Right ventricle myocardium inferior (tissue), 1 donor: ENCODE measurements at regions of chr12 and their contacts with region 1.

Region 1: GRCh38 chr12:81627336-81628189 is 131.6 kb downstream of the PPFIA2 start:
- DNase-seq: no peak
- ATAC-seq: no peak

Region 2: DNA sequence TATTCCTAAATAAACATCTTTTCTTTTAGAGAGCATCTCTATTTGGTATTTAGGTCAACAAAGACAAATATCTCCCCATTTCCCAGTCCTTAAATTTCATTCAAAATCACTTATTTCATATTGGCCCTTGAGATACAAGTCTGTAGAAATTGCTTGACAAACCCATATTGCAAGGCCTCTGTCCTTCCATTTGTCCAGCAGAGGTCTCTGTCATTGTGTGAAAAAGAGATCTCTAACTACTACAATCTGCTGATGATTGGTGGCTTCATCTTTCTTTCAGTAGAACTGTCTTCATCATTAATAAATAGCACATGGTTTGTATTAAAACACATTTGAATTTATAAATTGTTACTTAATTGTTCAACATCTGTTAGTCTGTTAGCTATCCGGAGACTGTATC is 297.1 kb before region 1 on chr12:
- intact Hi-C with region 1: loop called (anchors 10 kb)
- DNase-seq: no peak
- ATAC-seq: no peak

Region 3: DNA sequence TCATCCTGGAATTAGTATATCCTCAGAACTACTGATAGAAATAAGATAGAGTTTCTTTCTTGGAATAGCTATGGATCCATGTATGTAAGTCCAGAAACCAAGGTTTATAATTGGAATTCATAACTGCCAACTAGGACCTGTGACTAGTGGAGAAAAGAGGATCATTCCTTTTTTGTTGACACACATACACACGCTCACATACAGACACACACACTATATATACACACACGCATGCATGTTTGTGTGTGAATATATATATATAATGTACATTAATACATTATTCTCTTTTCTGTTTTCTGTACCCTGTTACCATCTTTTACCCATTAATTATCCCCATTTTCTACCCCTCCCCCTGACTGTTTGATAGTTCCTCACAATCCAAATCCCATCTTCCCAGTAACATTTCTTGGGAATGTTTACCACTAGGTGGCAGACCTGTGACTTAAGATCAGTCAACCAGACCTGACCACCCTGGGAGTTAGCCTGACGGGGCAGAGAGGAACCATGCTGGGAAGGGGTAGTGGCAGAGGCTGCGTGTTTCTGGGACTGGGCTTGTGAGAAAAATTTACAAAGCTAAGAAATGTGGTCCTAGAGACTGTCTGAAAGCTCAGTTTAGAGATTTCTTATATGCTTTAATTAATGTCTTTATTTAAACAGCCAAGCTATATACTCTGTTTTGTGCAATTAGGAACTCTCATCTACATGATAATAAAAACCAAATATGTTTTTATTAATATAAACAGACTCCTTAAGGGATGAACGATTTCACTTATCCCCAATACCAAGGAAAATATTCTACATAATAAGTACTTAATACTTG is 176.4 kb before region 1 on chr12:
- intact Hi-C with region 1: loop called (anchors 1 kb)
- DNase-seq: no peak
- ATAC-seq: peak; percentile 54

Region 4: GRCh38 chr12:81699567-81699966 is 72.0 kb after region 1 on chr12:
- intact Hi-C with region 1: no loop called
- DNase-seq: no peak
- ATAC-seq: no peak